GM12878 (cell line): ENCODE measurements at regions of chr10 and their contacts with region 1.

Region 1: GRCh38 chr10:92662848-92663247 is 26.9 kb upstream of the HHEX start:
- DNase-seq: no peak
- ATAC-seq: no peak
- H3K4me3 ChIP-seq: no peak overlapping the region
- H3K27ac ChIP-seq: no peak overlapping the region
- H3K4me1 ChIP-seq: no peaks in the 10 kb centered on the region
- H3K27me3 ChIP-seq: no peaks in the 10 kb centered on the region
- CTCF ChIP-seq: no peak
- EP300 ChIP-seq: no peak
- POLR2A ChIP-seq: no peak
- RAD21 ChIP-seq: no peak

Region 2: DNA sequence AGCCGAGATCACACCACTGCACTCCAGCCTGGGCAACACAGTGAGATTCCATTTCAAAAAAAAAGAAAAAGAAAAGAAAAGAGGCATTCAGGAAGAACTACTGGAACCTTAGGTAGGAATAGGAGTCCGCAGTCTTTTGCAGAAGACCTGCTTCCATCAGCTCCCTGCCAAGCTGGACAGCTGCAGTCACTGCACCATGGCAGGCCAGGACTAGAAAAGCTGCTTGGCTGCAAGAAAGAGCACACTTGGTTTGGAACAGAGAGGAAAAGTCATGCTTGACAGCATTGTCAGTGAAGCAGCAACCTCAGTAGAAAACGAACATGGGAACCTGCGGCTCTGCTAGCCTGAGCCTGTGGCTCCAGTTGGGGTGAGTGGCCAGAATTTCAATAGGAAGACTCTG is 267.6 kb before region 1 on chr10:
- CTCF ChIA-PET with region 1: no interaction called
- POLR2A ChIA-PET with region 1: no interaction called
- RAD21 ChIA-PET with region 1: no interaction called
- SMC1A ChIA-PET with region 1: no interaction called
- in situ Hi-C with region 1: no loop called
- intact Hi-C with region 1: no loop called
- DNase-seq: no peak
- ATAC-seq: no peak
- H3K4me3 ChIP-seq: no peak overlapping the region
- H3K27ac ChIP-seq: no peak overlapping the region
- H3K4me1 ChIP-seq: no peaks in the 10 kb centered on the region
- H3K27me3 ChIP-seq: no peaks in the 10 kb centered on the region
- CTCF ChIP-seq: no peak
- EP300 ChIP-seq: no peak
- POLR2A ChIP-seq: no peak
- RAD21 ChIP-seq: no peak

Region 3: DNA sequence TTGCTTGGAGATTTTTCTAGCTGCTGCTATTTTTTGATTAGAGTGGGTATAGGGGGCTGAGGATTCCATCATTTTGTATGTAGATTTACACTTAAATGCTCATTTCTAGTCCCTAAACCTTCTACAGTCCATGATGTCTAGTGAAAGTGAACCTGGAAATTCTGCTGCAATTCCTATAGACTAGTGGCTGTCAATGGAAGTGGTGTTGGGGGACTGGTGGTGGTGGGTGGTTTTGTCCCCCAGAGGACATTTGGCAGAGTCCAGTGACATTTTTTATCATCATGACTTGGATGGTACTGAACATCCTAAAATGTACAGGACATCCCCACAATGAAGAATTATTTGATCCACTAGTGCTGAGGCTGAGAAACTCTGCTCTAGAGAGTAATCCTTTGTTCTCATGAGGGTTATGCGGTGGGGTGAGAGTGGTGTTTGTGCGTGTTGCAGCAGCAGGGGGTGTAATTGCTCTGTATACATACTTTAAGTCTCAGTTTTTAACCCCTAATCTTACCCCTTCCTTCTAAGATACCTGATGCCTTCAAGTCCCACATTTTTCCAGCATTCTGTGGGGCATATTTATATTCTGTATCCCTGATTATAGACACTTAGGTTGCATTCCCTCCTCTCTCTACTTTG is 34.9 kb before region 1 on chr10:
- CTCF ChIA-PET with region 1: interaction called, 3 read pairs
- POLR2A ChIA-PET with region 1: interaction called, 3 read pairs
- RAD21 ChIA-PET with region 1: no interaction called
- SMC1A ChIA-PET with region 1: no interaction called
- in situ Hi-C with region 1: no loop called
- intact Hi-C with region 1: loop called (anchors 1 kb)
- DNase-seq: no peak
- ATAC-seq: no peak
- H3K4me3 ChIP-seq: no peak overlapping the region
- H3K27ac ChIP-seq: no peak overlapping the region
- H3K4me1 ChIP-seq: no peaks in the 10 kb centered on the region
- H3K27me3 ChIP-seq: no peaks in the 10 kb centered on the region
- CTCF ChIP-seq: peak in 1 of 3 experiments; percentile 10; a peak in 1 of 6 replicates
- EP300 ChIP-seq: no peak
- POLR2A ChIP-seq: no peak
- RAD21 ChIP-seq: no peak

Region 4: DNA sequence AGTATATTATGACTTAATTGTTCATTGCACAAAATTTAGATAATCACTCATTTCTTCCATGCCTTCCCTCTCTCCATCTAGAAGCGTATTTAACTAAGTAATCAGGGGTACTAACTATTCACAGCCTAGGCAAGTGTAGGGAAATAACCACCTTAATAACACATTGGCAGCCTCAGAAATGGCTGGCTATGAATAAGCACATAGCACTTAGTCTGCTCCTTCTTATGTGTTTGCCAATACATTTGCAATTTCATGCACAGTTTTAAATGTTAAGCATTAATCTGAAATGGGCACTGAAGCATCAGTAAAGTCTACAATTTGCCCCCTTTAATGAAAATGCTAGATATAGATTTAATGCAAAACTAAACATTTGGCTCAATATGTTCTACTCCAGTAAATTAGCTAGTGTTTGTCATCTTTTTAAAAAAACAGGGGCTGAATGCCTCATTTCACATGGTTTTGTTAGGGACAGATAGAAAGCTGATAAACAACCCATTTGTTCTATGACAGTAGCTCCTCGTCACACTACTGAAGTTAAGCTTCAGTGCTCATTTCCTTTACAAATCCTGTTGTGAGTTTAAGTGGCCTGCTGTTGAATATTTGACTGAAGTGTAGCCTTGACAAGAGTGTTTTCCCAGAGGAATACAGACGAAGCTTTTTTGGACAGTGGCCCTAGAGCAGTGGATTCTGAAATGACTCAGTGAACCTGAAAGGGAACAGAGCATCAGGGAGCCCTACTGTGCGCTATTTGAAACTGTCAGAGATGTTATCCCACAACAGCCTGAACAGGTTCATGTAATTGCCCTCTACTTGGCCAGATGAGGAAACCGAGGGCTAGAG is 57.4 kb after region 1 on chr10:
- CTCF ChIA-PET with region 1: no interaction called
- POLR2A ChIA-PET with region 1: no interaction called
- RAD21 ChIA-PET with region 1: no interaction called
- SMC1A ChIA-PET with region 1: no interaction called
- in situ Hi-C with region 1: no loop called
- intact Hi-C with region 1: no loop called
- DNase-seq: no peak
- ATAC-seq: no peak
- H3K4me3 ChIP-seq: no peak overlapping the region
- H3K27ac ChIP-seq: no peak overlapping the region
- H3K4me1 ChIP-seq: no peaks in the 10 kb centered on the region; the same call in 1 of the 2 replicates
- H3K27me3 ChIP-seq: peaks cover 0 to 7% of the 10 kb centered on the region in 2 experiments; a peak in 3 of 4 replicates
- CTCF ChIP-seq: no peak
- EP300 ChIP-seq: no peak
- POLR2A ChIP-seq: no peak
- RAD21 ChIP-seq: no peak